PC-9 (cell line): ENCODE measurements at regions of chr4 and their contacts with region 1.

Region 1: GRCh38 chr4:76194325-76194724 is 19.3 kb downstream of the SCARB2 start:
- DNase-seq: peak in 1 of 2 experiments; percentile 89
- H3K4me3 ChIP-seq: no peak overlapping the region; the same call in 1 of the 2 replicates
- H3K27ac ChIP-seq: peak overlapping the region; percentile 99
- H3K4me1 ChIP-seq: peaks cover 35% of the 10 kb centered on the region
- H3K27me3 ChIP-seq: no peaks in the 10 kb centered on the region
- CTCF ChIP-seq: no peak

Region 2: GRCh38 chr4:75989846-75990528 is 204.3 kb before region 1 on chr4:
- CTCF ChIA-PET with region 1: no interaction called
- POLR2A ChIA-PET with region 1: no interaction called
- intact Hi-C with region 1: no loop called
- DNase-seq: no peak
- H3K4me3 ChIP-seq: peak overlapping the region; percentile 92
- H3K27ac ChIP-seq: no peak overlapping the region
- H3K4me1 ChIP-seq: peaks cover 16% of the 10 kb centered on the region
- H3K27me3 ChIP-seq: no peaks in the 10 kb centered on the region
- CTCF ChIP-seq: no peak

Region 3: DNA sequence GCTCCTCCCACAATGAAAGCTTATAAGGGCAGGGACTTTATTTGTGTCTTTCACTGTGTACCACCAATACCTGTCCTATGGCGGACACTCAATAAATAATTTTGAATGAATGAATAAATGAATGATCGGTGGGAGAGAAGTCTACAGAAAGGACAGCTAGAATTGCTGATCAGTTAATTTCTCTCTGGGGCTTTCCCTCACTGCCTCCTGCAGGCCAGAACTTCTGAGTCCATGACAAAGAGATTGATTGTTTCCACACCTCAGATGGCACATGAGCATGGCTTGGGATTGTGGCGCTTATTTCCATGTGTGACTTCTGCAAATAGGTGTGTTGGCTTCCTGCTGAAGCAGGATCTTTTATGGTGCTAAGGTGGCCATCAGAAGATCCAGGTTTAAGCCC is 63.5 kb after region 1 on chr4:
- CTCF ChIA-PET with region 1: no interaction called
- POLR2A ChIA-PET with region 1: interaction called, 10 read pairs
- intact Hi-C with region 1: no loop called
- DNase-seq: no peak
- H3K4me3 ChIP-seq: no peak overlapping the region
- H3K27ac ChIP-seq: no peak overlapping the region
- H3K4me1 ChIP-seq: no peaks in the 10 kb centered on the region
- H3K27me3 ChIP-seq: no peaks in the 10 kb centered on the region
- CTCF ChIP-seq: no peak